ENCODE measurements at regions of chr3 and their contacts with region 1.

Region 1: GRCh38 chr3:39383045-39383880 is at the start of gene SLC25A38:
- DNase-seq: peak; percentile 83
- CTCF ChIP-seq: peak; percentile 45

Region 2: GRCh38 chr3:39180546-39181346 is 202.5 kb before region 1 on chr3:
- in situ Hi-C with region 1: loop called (anchors 25 kb)
- DNase-seq: peak; percentile 97
- CTCF ChIP-seq: no peak